Calu3 (cell line): ENCODE measurements at regions of chr6 and their contacts with region 1.

Region 1: DNA sequence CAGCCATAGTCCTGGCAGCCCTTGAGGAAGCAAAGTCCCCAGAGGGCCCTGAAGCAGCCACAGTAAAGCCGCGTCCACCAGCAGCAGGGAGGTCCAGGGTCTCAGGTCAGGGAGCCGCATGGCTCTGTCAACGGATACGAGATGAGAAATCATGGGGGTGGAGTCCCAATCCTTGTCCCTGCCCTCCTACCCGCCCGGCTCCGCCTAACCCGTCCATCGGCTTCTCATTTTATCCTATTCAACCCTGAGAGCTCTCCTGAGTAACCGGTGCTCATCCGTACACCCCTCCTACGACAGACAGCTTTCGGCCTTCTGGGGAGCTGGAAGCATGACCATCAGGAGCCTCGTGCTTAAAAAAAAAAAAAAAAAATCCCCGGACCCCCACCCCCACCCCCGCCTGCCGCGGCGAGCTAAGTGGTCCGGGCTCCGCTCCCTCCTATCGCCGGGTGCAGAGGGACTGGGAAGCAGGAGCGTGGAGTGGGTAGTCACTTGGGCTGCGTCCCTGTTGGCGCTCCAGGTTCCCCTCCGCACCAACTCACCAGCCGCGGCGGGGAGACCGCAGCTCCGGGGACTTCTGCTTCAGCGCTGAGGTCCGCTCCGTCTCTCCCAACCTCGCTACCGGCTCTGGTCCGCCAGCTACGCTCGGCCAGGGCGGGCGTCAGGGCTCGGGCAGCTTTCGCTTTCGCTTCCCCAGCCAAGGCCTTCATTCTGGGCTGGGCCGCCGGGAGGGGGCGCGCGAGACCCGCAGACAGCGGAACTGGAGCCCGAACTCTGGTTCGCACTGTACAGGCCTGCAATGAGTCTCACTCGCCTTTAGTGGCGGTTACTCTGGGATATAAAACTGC is at the start of gene TAP2:
- DNase-seq: peak; percentile 100
- H3K4me3 Mint-ChIP-seq: peak within 1 kb of the TSS; percentile 77
- H3K27ac Mint-ChIP-seq: peak within 1 kb of the TSS; percentile 0
- H3K4me1 Mint-ChIP-seq: peaks cover 29% of the 10 kb centered on the region
- H3K27me3 Mint-ChIP-seq: no peaks in the 10 kb centered on the region
- CTCF ChIP-seq: peak; percentile 98
- total RNA-seq, gene TAP2: 180 and 279 TPM in 2 replicates

Region 2: GRCh38 chr6:32825966-32826365 is 12.4 kb before region 1 on chr6:
- CTCF ChIA-PET with region 1: interaction called, 13 read pairs
- intact Hi-C with region 1: no loop called
- DNase-seq: peak; percentile 32
- H3K4me3 Mint-ChIP-seq: no peak overlapping the region
- H3K27ac Mint-ChIP-seq: no peak overlapping the region
- H3K4me1 Mint-ChIP-seq: no peaks in the 10 kb centered on the region
- H3K27me3 Mint-ChIP-seq: no peaks in the 10 kb centered on the region
- CTCF ChIP-seq: peak; percentile 25

Region 3: GRCh38 chr6:32862725-32863124 is 24.4 kb after region 1 on chr6:
- CTCF ChIA-PET with region 1: interaction called, 171 read pairs
- intact Hi-C with region 1: no loop called
- DNase-seq: no peak
- H3K4me3 Mint-ChIP-seq: no peak overlapping the region
- H3K27ac Mint-ChIP-seq: no peak overlapping the region
- H3K4me1 Mint-ChIP-seq: peaks cover 21% of the 10 kb centered on the region
- H3K27me3 Mint-ChIP-seq: no peaks in the 10 kb centered on the region
- CTCF ChIP-seq: no peak

Region 4: DNA sequence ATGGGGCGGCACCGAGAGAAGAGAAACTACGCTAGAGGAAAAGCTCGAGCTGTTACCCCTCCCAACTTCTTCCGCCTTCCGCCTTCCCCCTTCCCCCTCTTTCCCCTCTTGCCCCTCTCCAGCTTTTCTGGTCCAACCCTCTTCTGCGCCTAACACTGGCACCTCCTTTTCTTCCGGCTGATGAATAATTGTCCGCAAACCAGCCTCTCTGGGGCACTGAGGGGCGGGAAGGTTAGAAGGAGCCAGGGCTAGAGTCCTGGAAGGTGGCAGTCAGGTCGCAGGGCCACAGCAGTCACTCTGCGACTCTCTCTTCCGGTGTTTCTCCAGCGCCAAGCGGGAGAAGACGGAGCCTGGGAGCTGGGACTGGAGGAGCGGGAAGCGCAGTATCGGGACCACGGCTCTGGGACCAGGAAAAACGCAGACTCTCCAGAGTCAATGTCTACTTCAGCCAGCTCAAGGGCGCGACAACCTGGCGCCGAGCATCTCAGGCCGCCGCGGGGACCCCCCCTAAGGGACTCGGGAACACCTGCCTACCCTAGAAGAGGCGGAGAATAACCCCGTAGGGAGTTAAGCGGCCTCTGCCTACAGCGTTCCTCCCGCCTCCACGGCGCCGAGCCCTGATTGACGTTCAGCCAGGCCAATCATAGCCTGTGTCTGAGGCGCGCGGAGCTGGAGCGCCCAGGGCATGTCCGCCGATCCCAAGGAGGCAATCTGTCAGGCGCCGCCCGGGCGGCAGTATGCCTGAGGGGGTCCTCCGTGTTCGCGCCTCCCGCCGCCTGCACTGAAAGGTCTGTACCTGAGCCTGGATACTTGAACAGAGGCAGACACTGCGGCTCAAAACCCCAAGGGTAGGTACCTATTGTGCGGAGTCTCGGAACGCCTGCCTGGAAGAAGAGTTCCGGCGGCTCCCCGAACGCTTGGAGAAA is 56.0 kb after region 1 on chr6:
- CTCF ChIA-PET with region 1: interaction called, 11 read pairs
- intact Hi-C with region 1: no loop called
- DNase-seq: peak; percentile 99
- H3K4me3 Mint-ChIP-seq: peak overlapping the region; percentile 88
- H3K27ac Mint-ChIP-seq: peak overlapping the region; percentile 97
- H3K4me1 Mint-ChIP-seq: peaks cover 38% of the 10 kb centered on the region
- H3K27me3 Mint-ChIP-seq: no peaks in the 10 kb centered on the region
- CTCF ChIP-seq: peak; percentile 37

Region 5: DNA sequence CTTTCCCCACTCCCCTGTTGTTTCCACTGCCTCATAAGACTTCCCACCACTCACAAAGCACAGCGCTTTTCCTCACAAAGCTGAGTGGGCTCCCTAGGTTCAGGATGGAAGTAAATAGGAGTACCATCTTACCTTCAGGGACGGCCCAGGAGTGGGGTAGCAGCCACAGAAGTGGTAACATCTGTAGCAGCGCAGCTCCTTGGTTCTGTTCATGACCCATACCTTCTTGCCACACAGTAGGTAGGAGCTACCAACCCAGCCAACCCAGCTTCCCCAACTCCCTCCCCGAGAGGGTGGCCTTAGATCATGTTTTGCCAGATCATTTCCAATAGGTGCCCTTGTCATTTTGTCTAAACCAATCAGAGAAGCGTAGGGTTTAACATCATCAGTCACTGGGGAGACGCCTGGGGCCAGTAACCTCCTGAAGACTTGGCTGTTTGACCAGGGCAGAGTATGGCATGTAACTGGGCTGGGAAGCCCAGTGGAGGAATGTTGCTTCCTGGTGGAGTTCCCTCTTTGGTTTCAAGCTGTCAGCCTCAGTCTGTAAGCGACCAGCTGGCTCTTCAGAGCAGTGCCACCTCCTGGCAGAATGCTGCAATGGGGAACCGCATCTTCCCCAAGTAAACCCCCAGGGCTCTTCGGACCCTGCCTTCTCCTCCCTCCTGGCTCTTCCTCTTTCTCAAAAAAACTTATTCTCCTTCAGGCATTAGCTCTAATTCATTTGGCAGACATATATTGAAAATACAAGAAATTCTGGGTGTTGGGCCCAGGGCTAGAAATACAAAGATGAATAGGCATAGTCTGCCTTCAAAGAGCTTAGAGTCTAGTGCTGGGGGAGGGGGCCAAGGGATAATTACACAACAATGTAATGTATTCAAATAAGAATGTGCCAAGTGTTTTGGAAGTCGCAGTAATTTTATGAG is 114.7 kb after region 1 on chr6 and contains the start of gene HLA-DMA:
- CTCF ChIA-PET with region 1: interaction called, 30 read pairs
- intact Hi-C with region 1: no loop called
- DNase-seq: peak; percentile 98
- H3K4me3 Mint-ChIP-seq: peak within 1 kb of the TSS; percentile 75
- H3K27ac Mint-ChIP-seq: peak within 1 kb of the TSS; percentile 82
- H3K4me1 Mint-ChIP-seq: peaks cover 41% of the 10 kb centered on the region
- H3K27me3 Mint-ChIP-seq: no peaks in the 10 kb centered on the region
- CTCF ChIP-seq: peak; percentile 93
- total RNA-seq, gene HLA-DMA: 98.0 and 104 TPM in 2 replicates